Natural killer cell (primary cell): ENCODE measurements at regions of chr20 and their contacts with region 1.

Region 1: DNA sequence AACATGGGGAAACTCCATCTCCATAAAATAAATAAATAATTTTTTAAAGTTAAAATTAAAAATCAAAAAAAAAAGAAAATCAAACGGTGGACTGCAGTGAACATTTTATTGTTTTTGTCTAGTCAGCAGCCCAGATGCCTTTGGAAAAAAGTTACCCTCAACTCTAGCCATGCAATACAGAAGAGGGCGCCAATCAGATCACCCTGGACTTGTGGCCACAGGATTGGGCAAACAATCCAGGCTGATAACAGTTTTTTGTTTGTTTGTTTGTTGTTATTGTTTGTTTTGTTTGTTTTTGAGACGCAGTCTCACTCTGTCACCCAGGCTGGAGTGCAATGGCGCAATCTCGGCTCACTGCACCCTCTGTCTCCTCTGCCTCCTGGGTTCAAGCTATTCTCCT is 30.5 kb upstream of the NELFCD start:
- DNase-seq: no peak
- ATAC-seq: no peak
- H3K4me3 ChIP-seq: no peak overlapping the region
- H3K4me3 Mint-ChIP-seq: no peak overlapping the region
- H3K27ac ChIP-seq: no peak overlapping the region
- H3K27ac Mint-ChIP-seq: no peak overlapping the region
- H3K4me1 ChIP-seq: no peaks in the 10 kb centered on the region
- H3K4me1 Mint-ChIP-seq: no peaks in the 10 kb centered on the region
- H3K27me3 ChIP-seq: no peaks in the 10 kb centered on the region
- H3K27me3 Mint-ChIP-seq: peaks cover 5 to 18% of the 10 kb centered on the region in 2 donors
- CTCF ChIP-seq: no peak

Region 2: GRCh38 chr20:58870239-58871014 is 80.2 kb before region 1 on chr20:
- intact Hi-C with region 1: no loop called
- DNase-seq: peak; percentile 46 to 78
- ATAC-seq: peak; percentile 72 to 81 (median 77)
- H3K4me3 ChIP-seq: no peak overlapping the region
- H3K4me3 Mint-ChIP-seq: no peak overlapping the region
- H3K27ac ChIP-seq: no peak overlapping the region
- H3K27ac Mint-ChIP-seq: no peak overlapping the region
- H3K4me1 ChIP-seq: no peaks in the 10 kb centered on the region
- H3K4me1 Mint-ChIP-seq: peaks cover 0 to 9% of the 10 kb centered on the region in 2 donors
- H3K27me3 ChIP-seq: no peaks in the 10 kb centered on the region
- H3K27me3 Mint-ChIP-seq: peaks cover 16 to 23% of the 10 kb centered on the region in 2 donors
- CTCF ChIP-seq: peak; percentile 70

Region 3: DNA sequence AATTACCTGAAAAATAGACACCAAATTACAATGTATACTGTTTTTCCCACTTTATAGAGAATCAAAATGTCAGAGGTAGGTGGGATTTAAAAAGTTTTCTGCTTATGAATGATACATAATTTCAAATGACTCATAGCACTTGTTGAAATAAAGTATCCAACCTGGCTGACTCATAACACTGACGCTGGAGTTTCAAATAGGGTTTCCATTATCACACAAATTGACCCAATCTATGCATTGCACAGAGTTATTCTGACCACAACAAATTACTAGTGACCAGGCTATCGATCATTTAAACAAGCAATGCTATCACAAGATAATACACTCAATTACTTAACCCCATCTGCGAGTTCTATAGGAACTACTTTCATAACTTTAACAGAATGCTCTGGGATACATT is 123.8 kb after region 1 on chr20:
- intact Hi-C with region 1: no loop called
- DNase-seq: no peak
- ATAC-seq: no peak
- H3K4me3 ChIP-seq: no peak overlapping the region
- H3K4me3 Mint-ChIP-seq: no peak overlapping the region
- H3K27ac ChIP-seq: no peak overlapping the region
- H3K27ac Mint-ChIP-seq: no peak overlapping the region
- H3K4me1 ChIP-seq: peaks cover 13% of the 10 kb centered on the region
- H3K4me1 Mint-ChIP-seq: peaks cover 5 to 19% of the 10 kb centered on the region in 2 donors
- H3K27me3 ChIP-seq: peaks cover 6% of the 10 kb centered on the region
- H3K27me3 Mint-ChIP-seq: peaks cover 22 to 39% of the 10 kb centered on the region in 2 donors
- CTCF ChIP-seq: no peak

Region 4: GRCh38 chr20:59222253-59223181 is 271.9 kb after region 1 on chr20:
- intact Hi-C with region 1: loop called (anchors 10 kb)
- DNase-seq: peak; percentile 79 to 87
- ATAC-seq: peak; percentile 90 to 98 (median 96)
- H3K4me3 ChIP-seq: peak overlapping the region; percentile 34
- H3K4me3 Mint-ChIP-seq: peak overlapping the region; percentile 93
- H3K27ac ChIP-seq: peak overlapping the region; percentile 12
- H3K27ac Mint-ChIP-seq: peak overlapping the region; percentile 73 to 76
- H3K4me1 ChIP-seq: peaks cover 17% of the 10 kb centered on the region
- H3K4me1 Mint-ChIP-seq: peaks cover 30 to 33% of the 10 kb centered on the region in 2 donors
- H3K27me3 ChIP-seq: no peaks in the 10 kb centered on the region
- H3K27me3 Mint-ChIP-seq: no peaks in the 10 kb centered on the region
- CTCF ChIP-seq: peak; percentile 96